GM10248 (cell line): ENCODE measurements at regions of chr3 and their contacts with region 1.

Region 1: GRCh38 chr3:189137416-189137815 is 34.4 kb upstream of the TPRG1 start:
- DNase-seq: no peak
- CTCF ChIP-seq: no peak

Region 2: GRCh38 chr3:189123595-189124387 is 13.6 kb before region 1 on chr3:
- CTCF ChIA-PET with region 1: interaction called, 14 read pairs
- POLR2A ChIA-PET with region 1: no interaction called
- DNase-seq: no peak
- CTCF ChIP-seq: no peak

Region 3: GRCh38 chr3:189148081-189148507 is 10.7 kb after region 1 on chr3:
- CTCF ChIA-PET with region 1: interaction called, 13 read pairs
- POLR2A ChIA-PET with region 1: no interaction called
- DNase-seq: peak; percentile 56
- CTCF ChIP-seq: peak; percentile 82